Panc1 (cell line): ENCODE measurements at regions of chr5 and their contacts with region 1.

Region 1: GRCh38 chr5:43120720-43121564 is at the start of gene ZNF131:
- DNase-seq: peak; percentile 94
- ATAC-seq: peak; percentile 99
- H3K4me3 ChIP-seq: peak within 1 kb of the TSS; percentile 84 to 96
- H3K27ac ChIP-seq: peak within 1 kb of the TSS; percentile 95
- H3K4me1 ChIP-seq: peaks cover 16% of the 10 kb centered on the region
- H3K27me3 ChIP-seq: no peaks in the 10 kb centered on the region
- CTCF ChIP-seq: no peak
- total RNA-seq, gene ZNF131: 47.3 TPM

Region 2: DNA sequence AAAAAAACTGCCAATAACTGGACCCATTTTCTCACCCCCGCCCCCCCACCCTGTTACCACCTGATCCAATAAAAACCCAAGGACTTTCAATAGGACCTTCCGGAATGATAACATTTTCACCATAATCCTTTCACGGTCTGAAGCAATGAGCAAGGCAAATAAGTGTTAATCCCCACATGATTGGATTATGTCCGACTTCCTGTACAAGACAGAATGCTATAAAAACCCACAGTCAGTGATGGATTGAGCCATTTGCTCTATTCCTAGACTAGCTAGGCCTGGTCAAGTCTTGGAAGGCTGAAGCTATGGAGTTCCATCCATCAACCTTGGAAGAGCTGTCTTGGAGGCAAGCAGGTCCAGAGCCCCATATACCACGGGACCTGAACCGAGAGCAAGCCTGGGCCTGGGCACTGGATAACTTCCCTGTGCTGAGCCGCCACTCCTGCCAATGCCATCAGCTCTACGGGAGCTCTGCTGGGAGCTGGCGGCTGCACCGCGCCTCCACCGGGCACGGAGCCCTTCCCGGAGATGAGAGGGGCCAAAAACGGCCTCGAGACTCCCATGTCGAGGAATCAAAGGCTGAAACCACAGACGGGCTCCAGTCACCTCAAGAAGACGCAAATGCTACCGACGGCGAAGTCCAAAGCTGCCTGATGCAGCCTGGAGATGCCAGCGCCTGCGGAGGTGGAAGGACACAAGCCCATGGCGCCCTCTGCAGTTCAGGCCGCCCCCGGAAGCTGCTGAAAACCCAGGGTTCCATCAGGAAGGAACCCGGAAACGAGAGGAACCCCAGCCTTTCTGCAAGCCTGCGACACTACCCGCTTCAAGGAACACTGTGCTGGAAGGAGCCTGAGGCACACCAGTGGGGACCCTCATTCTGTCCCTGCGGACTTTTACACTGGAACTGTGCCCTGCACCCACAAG is 150.0 kb before region 1 on chr5:
- CTCF ChIA-PET with region 1: no interaction called
- POLR2A ChIA-PET with region 1: interaction called, 11 read pairs
- in situ Hi-C with region 1: no loop called
- intact Hi-C with region 1: no loop called
- DNase-seq: no peak
- ATAC-seq: peak; percentile 62; the same call in 1 of the 2 replicates
- H3K4me3 ChIP-seq: no peak overlapping the region
- H3K27ac ChIP-seq: no peak overlapping the region
- H3K4me1 ChIP-seq: no peaks in the 10 kb centered on the region
- H3K27me3 ChIP-seq: no peaks in the 10 kb centered on the region
- CTCF ChIP-seq: peak; percentile 46

Region 3: GRCh38 chr5:43105369-43106289 is 15.3 kb before region 1 on chr5:
- CTCF ChIA-PET with region 1: no interaction called
- POLR2A ChIA-PET with region 1: interaction called, 10 read pairs
- in situ Hi-C with region 1: no loop called
- intact Hi-C with region 1: no loop called
- DNase-seq: peak; percentile 98
- ATAC-seq: peak; percentile 97
- H3K4me3 ChIP-seq: peak overlapping the region; percentile 47 to 87
- H3K27ac ChIP-seq: peak overlapping the region; percentile 75
- H3K4me1 ChIP-seq: peaks cover 7% of the 10 kb centered on the region
- H3K27me3 ChIP-seq: no peaks in the 10 kb centered on the region
- CTCF ChIP-seq: peak; percentile 100